Activated CD4-positive, alpha-beta memory T cell treated with anti-CD3 and anti-CD28 coated beads for 36 hours (primary cell): ENCODE measurements at regions of chr1 and their contacts with region 1.

Region 1: DNA sequence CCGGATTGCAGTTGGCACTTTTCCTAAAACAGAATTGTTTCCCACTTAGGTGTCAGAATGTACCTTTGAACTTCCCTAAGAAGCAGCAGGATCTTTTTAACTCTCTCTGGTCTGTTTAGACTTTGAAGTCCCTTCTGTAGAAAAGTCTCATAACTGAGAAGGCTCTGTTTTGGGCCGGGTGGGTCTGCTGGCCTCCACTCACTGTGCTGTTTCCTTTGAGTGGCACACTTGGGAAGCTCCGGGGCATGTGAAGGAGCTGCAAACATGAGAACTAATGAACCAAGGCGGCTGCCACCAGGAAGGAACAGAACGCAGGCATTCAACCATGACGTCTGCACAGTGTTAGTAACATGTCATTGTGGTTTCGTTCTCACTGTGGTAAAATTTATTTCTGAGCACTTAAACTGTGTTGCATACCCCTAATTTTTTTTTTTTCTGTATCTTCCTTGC is 19.5 kb upstream of the NCMAP start:
- DNase-seq: peak; percentile 81
- H3K4me3 Mint-ChIP-seq: peak overlapping the region; percentile 76
- H3K27ac Mint-ChIP-seq: peak overlapping the region; percentile 99
- H3K4me1 Mint-ChIP-seq: peaks cover 83% of the 10 kb centered on the region
- H3K27me3 Mint-ChIP-seq: no peaks in the 10 kb centered on the region

Region 2: GRCh38 chr1:24491577-24492360 is 44.6 kb before region 1 on chr1:
- CTCF ChIA-PET with region 1: interaction called, 7 read pairs
- POLR2A ChIA-PET with region 1: interaction called, 3 read pairs
- intact Hi-C with region 1: loop called (anchors 1 kb)
- DNase-seq: no peak
- H3K4me3 Mint-ChIP-seq: no peak overlapping the region
- H3K27ac Mint-ChIP-seq: no peak overlapping the region
- H3K4me1 Mint-ChIP-seq: peaks cover 30% of the 10 kb centered on the region
- H3K27me3 Mint-ChIP-seq: no peaks in the 10 kb centered on the region

Region 3: DNA sequence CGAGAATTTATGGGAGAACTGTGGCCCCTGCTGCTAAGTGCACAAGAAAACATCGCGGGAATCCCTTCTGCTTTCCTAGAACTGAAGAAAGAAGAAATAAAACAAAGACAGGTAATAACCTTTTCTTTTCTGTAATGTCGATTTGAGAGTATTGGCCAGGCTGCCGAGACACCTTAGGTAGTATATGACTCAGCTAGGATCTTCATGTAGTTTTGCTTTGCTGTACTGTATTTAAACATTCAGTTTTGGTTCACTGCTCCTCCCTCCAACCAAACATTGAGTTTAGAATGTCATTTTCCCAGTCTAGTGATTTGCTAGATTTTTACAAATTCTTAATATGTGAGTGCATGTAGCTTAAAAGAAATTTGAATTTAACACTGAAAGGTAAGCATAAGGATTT is 112.5 kb after region 1 on chr1:
- CTCF ChIA-PET with region 1: no interaction called
- POLR2A ChIA-PET with region 1: no interaction called
- intact Hi-C with region 1: no loop called
- DNase-seq: no peak
- H3K4me3 Mint-ChIP-seq: no peak overlapping the region
- H3K27ac Mint-ChIP-seq: peak overlapping the region; percentile 7
- H3K4me1 Mint-ChIP-seq: peaks cover 58% of the 10 kb centered on the region
- H3K27me3 Mint-ChIP-seq: no peaks in the 10 kb centered on the region